Activated T-helper 2 cell treated with anti-CD3 and anti-CD28 coated beads, Interferon-gamma antibody, Interleukin-2, Interleukin-4, amounts not matched to agents 10 μg/mL and 5 μg/mL and 100 μg/mL, durations not matched to agents 14 hours and 24 hours and 36 hours (primary cell): ENCODE measurements at regions of chr21 and their contacts with region 1.

Region 1: DNA sequence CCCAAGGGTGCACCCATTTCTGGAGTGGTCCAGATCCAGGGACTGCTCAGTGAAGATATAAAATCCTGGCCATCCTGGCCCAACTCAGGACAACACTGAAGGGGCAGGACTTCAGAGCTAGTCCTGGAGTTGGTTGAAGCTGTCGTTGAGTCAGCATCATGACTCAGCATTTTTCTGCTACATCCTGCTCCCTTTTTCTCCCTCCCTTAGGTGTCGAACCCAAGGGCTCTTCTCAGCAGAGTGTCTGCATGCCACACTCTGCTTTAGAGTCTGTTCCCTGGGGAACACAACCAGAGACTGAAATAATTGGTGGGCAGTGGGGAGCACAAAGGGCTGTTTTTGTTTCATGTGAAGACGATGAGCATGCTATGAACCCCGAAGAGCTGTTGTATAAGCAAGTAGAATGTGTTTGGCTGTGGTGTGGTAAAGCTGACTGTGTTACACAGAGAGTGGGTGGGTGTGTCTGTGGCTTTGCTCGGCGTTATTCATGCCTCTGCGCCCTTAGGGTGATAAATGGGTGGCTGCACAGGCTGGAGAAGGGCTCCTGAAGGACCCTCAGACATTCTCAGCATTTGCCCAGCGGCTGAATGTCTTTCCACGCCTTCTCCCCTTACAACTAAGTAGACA is 167.2 kb downstream of the CYYR1 start:
- DNase-seq: peak; percentile 11
- H3K4me3 Mint-ChIP-seq: peak overlapping the region; percentile 42
- H3K27ac Mint-ChIP-seq: peak overlapping the region; percentile 54
- H3K4me1 Mint-ChIP-seq: peaks cover 30% of the 10 kb centered on the region
- H3K27me3 Mint-ChIP-seq: no peaks in the 10 kb centered on the region

Region 2: GRCh38 chr21:26389971-26390641 is 15.7 kb before region 1 on chr21:
- intact Hi-C with region 1: loop called (anchors 2 kb)
- DNase-seq: no peak
- H3K4me3 Mint-ChIP-seq: no peak overlapping the region
- H3K27ac Mint-ChIP-seq: no peak overlapping the region
- H3K4me1 Mint-ChIP-seq: peaks cover 2% of the 10 kb centered on the region
- H3K27me3 Mint-ChIP-seq: no peaks in the 10 kb centered on the region

Region 3: DNA sequence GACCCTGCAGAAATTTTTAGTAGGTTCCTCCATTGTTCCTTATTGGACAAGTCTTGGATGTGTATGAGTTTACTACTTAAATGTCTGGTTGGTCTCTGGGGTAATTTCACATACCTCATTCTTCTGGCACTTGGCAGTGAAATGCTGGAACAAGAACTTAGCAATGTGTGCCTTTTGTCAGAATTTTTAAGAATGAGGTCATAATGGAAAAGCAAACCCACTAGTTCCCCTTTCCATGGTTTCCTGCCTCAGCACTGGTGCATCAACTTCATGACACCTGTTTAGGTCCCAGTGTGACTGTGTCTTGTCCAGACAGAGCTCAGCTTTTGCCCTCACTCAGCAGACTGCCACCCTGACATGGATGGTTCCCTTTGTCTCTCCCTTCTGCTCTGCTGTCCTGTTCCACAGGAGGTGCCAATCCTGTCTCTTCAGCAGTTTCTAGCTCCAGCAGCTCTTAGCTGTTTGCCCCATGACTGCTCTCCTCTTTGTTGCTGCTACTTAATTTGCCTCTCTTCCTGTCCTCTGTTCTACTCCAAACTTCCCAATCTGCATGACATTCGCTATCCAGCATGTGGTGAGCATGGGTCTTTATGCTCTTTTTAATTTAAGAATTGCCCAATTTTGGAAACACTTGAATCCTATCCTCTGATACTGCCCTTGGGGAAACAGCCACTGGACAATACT is 31.6 kb after region 1 on chr21:
- intact Hi-C with region 1: no loop called
- DNase-seq: no peak
- H3K4me3 Mint-ChIP-seq: no peak overlapping the region
- H3K27ac Mint-ChIP-seq: no peak overlapping the region
- H3K4me1 Mint-ChIP-seq: no peaks in the 10 kb centered on the region
- H3K27me3 Mint-ChIP-seq: no peaks in the 10 kb centered on the region